Right lobe of liver (tissue), 6 donors: ENCODE measurements at regions of chr6 and their contacts with region 1.

Region 1: DNA sequence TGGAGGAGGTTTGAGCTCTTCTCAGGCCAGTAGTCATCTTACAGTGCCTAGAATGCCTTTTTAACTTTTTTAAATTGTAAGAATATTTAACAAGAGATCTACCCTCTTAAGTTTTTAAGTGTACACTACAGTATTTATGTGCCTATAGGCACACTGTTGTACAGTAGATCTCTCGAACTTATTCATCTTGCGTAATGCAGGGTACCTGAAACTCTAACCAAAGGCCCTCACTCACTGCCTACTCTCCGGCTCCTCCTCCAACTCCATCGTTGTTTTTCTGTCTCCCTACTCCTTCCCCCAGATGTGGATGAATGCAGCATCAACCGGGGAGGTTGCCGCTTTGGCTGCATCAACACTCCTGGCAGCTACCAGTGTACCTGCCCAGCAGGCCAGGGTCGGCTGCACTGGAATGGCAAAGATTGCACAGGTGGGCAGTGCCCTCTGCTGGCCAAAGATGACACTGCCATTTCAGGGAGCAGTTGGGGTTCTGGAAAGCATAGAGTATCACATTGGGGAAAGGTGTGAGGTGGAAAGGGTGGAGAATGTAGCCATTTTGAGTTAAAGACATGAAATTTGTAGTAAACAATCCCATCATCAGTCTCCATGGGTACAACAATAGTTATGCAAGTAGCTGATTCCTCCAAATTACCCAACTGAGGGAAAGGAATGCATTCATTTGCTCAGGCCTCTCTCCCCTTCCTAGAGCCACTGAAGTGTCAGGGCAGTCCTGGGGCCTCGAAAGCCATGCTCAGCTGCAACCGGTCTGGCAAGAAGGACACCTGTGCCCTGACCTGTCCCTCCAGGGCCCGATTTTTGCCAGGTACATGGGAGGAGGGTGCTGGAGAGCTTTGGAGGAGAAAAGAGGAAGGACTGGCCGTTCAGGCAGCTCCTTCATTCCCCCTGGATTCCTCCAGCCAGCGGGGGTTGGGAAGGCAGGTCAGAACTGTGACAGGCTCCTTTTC is 18.4 kb upstream of the ZNF76 start:
- DNase-seq: peak; percentile 74 to 82 (median 81)
- ATAC-seq: peak; percentile 87 to 96 (median 90)
- H3K4me3 ChIP-seq: no peak overlapping the region
- H3K27ac ChIP-seq: no peak overlapping the region
- H3K4me1 ChIP-seq: no peaks in the 10 kb centered on the region
- H3K27me3 ChIP-seq: no peaks in the 10 kb centered on the region
- CTCF ChIP-seq: peak; percentile 94 to 96 (median 94)
- POLR2A ChIP-seq: no peak

Region 2: GRCh38 chr6:35139908-35140655 is 101.0 kb before region 1 on chr6:
- intact Hi-C with region 1: loop called (anchors 5 to 10 kb)
- DNase-seq: peak in 2 of 3 donors; percentile 29 to 56
- ATAC-seq: peak; percentile 74 to 87 (median 79)
- H3K4me3 ChIP-seq: no peak overlapping the region
- H3K27ac ChIP-seq: peak overlapping the region in 2 of 3 donors; percentile 75 to 78
- H3K4me1 ChIP-seq: peaks cover 0 to 6% (median 0%) of the 10 kb centered on the region in 4 donors
- H3K27me3 ChIP-seq: no peaks in the 10 kb centered on the region
- CTCF ChIP-seq: peak; percentile 79 to 94 (median 84)
- POLR2A ChIP-seq: no peak

Region 3: DNA sequence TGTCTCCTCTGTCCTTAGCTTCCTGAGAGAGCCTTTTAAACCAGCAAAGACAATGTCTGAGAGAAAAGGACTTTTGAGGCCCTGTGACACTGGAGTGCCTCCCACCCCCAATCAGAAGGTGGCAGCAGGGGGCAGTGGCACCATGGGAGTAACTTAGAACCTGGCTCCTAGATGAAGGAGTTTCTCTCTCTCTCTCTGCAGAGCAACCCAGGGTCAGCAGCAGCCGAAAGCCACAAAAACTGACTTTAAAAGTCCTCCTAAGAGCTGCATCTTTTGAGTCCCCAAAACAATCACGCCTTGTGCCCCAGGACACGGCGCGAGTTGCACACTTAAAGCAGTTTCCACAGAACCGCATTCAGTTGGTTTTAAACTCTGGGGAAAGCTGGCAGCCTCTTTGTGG is 94.7 kb before region 1 on chr6:
- intact Hi-C with region 1: loop called (anchors 5 to 10 kb)
- DNase-seq: peak; percentile 63 to 74 (median 71)
- ATAC-seq: peak; percentile 97 to 99 (median 98)
- H3K4me3 ChIP-seq: no peak overlapping the region
- H3K27ac ChIP-seq: no peak overlapping the region
- H3K4me1 ChIP-seq: no peaks in the 10 kb centered on the region
- H3K27me3 ChIP-seq: no peaks in the 10 kb centered on the region
- CTCF ChIP-seq: peak; percentile 62 to 83 (median 78)
- POLR2A ChIP-seq: no peak

Region 4: DNA sequence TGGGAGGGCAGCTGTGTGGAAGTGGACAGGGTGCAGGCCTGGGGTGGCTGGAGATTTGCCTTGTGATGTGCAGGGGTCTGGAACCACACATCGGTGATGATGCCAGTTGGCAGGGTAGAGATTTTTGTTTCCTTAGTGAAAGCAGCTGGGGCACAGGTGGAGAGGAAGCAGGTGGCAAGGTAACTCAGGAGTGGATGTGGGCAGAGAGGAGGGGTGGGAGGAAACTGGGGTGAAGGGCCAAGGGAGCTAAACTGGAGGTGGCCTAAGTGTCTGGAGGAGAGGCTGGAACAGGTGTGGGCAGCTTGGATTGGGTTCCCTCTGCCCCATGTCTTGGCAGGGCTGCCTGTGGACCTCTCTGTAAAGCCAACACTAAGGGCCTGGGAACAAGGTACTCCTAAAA is 32.0 kb before region 1 on chr6:
- intact Hi-C with region 1: loop called in 1 of 2 experiments (anchors 5 kb)
- DNase-seq: no peak
- ATAC-seq: no peak
- H3K4me3 ChIP-seq: no peak overlapping the region
- H3K27ac ChIP-seq: no peak overlapping the region
- H3K4me1 ChIP-seq: peaks cover 0 to 7% (median 0%) of the 10 kb centered on the region in 4 donors
- H3K27me3 ChIP-seq: no peaks in the 10 kb centered on the region
- CTCF ChIP-seq: no peak
- POLR2A ChIP-seq: no peak